OCI-LY7 (cell line): ENCODE measurements at regions of chr19 and their contacts with region 1.

Region 1: GRCh38 chr19:18785179-18786128 is 5.7 kb downstream of the COMP start:
- DNase-seq: peak; percentile 88
- H3K4me3 ChIP-seq: no peak overlapping the region
- H3K27ac ChIP-seq: no peak overlapping the region
- H3K4me1 ChIP-seq: no peaks in the 10 kb centered on the region
- CTCF ChIP-seq: no peak

Region 2: GRCh38 chr19:18733196-18733647 is 52.2 kb before region 1 on chr19:
- CTCF ChIA-PET with region 1: no interaction called
- POLR2A ChIA-PET with region 1: no interaction called
- intact Hi-C with region 1: no loop called
- DNase-seq: no peak
- H3K4me3 ChIP-seq: no peak overlapping the region
- H3K27ac ChIP-seq: no peak overlapping the region
- H3K4me1 ChIP-seq: no peaks in the 10 kb centered on the region
- CTCF ChIP-seq: no peak

Region 3: DNA sequence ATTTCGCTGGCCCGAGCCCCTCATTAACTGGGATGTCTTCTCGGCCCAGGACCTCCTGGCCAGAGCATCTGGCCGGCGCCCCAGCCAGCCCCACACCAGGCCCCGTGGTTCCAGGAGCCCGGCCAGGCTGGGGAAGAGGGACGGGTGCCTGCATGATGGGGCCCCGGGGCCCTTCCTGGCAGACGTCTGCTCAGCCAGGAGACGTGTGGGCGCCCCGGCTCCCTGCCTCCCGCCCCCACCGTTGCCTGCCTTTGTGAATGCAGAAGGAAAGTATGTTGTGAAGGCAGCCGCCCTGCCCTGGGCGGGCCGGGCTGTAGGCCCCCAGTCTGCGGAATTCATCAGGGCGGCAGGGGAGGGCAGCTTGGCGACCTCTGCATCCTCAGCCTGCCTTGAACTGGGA is 10.1 kb after region 1 on chr19:
- CTCF ChIA-PET with region 1: no interaction called
- POLR2A ChIA-PET with region 1: interaction called, 10 read pairs
- intact Hi-C with region 1: no loop called
- DNase-seq: no peak
- H3K4me3 ChIP-seq: no peak overlapping the region
- H3K27ac ChIP-seq: no peak overlapping the region
- H3K4me1 ChIP-seq: no peaks in the 10 kb centered on the region
- CTCF ChIP-seq: no peak

Region 4: DNA sequence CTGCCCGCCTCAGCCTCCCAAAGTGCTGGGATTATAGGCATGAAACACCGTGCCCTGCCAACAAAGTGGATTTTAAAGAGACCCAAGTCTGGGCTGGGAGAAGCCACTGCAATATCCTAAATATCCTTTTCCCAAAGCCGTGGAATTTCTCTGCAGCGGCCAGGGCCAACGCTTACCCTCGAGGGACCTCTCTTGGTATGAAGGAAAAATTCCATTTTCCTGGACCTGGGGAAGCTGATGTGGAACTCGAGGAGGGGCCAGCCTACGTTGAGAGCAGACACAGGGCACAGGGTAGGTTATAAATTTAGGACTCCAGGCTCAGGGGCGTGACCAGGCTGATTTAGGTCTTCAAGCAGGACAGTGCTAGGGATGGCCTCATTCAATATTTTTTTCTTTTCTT is 28.6 kb after region 1 on chr19:
- CTCF ChIA-PET with region 1: no interaction called
- POLR2A ChIA-PET with region 1: no interaction called
- intact Hi-C with region 1: no loop called
- DNase-seq: no peak
- H3K4me3 ChIP-seq: no peak overlapping the region
- H3K27ac ChIP-seq: no peak overlapping the region
- H3K4me1 ChIP-seq: no peaks in the 10 kb centered on the region
- CTCF ChIP-seq: no peak

Region 5: DNA sequence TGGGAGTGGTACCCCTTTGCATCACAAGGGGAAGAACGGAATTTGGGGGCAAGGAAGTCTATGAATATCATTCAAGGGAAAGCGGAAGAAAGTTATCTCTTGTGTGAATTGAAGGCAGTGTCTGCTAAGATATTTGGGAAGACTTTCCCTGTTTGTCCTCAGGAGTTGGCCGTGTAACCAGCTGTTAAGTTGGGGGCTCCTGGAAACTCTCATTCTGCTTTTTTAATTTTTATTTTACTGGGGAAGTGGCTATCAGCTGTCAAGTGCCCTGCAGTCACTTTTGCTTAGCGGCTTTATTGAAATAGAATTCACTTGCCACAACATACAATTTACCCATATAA is 49.2 kb after region 1 on chr19:
- CTCF ChIA-PET with region 1: no interaction called
- POLR2A ChIA-PET with region 1: no interaction called
- intact Hi-C with region 1: no loop called
- DNase-seq: no peak
- H3K4me3 ChIP-seq: peak overlapping the region; percentile 94
- H3K27ac ChIP-seq: no peak overlapping the region
- H3K4me1 ChIP-seq: peaks cover 26% of the 10 kb centered on the region
- CTCF ChIP-seq: no peak

Region 6: GRCh38 chr19:18846862-18847548 is 61.6 kb after region 1 on chr19:
- CTCF ChIA-PET with region 1: no interaction called
- POLR2A ChIA-PET with region 1: no interaction called
- intact Hi-C with region 1: loop called (anchors 2 kb)
- DNase-seq: peak; percentile 72
- H3K4me3 ChIP-seq: no peak overlapping the region
- H3K27ac ChIP-seq: no peak overlapping the region
- H3K4me1 ChIP-seq: peaks cover 8% of the 10 kb centered on the region
- CTCF ChIP-seq: peak; percentile 91